ENCODE measurements at regions of chr15 and their contacts with region 1.

Region 1: DNA sequence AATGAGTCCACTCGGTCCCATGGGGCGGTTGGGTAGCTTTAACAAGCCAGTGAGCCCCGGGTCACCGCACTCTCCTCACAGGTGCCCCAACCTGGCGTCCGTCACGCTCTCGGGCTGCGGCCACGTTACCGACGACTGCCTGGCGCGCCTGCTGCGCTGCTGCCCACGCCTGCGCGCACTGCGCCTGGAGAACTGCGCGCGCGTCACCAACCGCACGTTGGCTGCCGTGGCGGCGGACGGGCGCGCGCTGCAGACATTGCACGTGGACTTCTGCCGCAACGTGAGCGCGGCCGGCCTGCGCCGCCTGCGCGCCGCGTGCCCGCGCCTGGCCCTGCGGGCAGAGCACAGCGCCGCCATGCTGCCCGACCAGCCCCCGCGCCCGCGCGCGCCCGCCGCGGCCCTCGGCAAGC is 3.4 kb downstream of the FBXL22 start:
- DNase-seq: peak; percentile 63 to 92 (median 85)
- H3K4me3 ChIP-seq: peak overlapping the region; percentile 52 to 93 (median 80)
- H3K27ac ChIP-seq: peak overlapping the region; percentile 76 to 98 (median 93)
- H3K27me3 ChIP-seq: no peaks in the 10 kb centered on the region
- CTCF ChIP-seq: peak in 29 of 56 donors; percentile 7 to 63 (median 37)

Region 2: DNA sequence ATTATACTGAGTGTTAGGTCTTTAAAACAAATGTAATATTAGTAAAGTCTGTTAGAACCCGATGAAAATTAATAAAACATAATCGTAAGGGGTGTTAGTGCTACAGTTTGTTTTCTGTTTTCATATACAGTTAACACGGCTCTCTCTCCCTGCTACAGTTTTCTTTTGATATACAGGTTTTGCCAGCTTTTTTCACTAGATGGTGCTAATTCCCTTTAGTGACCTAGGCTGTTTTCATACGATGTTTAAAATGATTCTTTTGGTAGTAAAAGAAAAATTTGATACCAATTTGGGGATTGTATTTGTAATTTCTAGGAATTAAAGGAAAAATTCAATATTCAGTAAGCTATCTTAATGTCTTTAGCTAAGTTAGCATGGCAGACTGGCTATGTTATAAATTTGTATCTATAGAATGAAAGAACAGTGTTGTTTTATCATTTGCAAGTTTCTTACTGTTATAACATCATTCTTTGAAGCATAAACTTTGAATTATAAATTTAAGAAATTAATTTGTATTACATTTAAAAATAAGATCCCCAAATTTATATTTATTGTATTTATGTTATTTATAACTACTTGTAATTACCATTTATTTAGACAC is 311.7 kb before region 1 on chr15:
- intact Hi-C with region 1: loop called (anchors 10 kb)
- DNase-seq: no peak
- H3K4me3 ChIP-seq: peak overlapping the region in 8 of 59 donors; percentile 2 to 24 (median 10)
- H3K27ac ChIP-seq: peak overlapping the region in 19 of 59 donors; percentile 0 to 78 (median 32)
- H3K27me3 ChIP-seq: no peaks in the 10 kb centered on the region
- CTCF ChIP-seq: peak; percentile 50 to 92 (median 74)

Region 3: DNA sequence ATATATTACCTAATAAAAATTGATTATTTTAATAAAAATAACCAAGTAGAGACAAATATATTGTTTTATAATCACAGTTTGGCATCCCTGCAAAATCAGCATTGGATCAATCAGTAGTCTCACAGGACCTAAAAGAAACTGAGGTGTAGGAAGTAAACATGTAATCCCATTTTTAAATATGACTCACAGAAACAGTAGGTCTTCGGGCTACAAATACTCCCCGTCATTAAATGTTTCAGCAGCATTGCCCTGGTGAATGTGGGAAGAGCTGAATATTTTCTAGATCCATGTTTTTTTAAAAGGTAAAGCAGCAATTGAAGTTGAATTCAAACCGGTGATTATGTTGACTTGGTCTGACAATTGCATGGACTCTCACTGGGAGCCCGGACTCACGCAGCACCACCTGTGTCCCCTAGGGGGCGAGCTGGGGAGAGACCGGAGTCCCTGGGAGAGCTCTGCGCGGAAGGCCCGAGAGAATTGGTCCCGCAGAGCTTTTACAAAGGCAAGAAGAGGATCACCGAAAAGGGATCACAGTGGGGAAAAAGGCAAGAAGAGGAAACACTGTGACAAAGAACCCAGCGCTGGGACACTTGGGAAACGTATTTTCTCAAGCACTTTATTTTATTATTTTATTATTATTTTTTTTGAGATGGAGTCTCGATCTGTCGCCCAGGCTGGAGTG is 113.4 kb before region 1 on chr15:
- intact Hi-C with region 1: loop called in 1 of 2 experiments (anchors 5 kb)
- DNase-seq: peak; percentile 74 to 88 (median 82)
- H3K4me3 ChIP-seq: peak overlapping the region in 4 of 59 donors; percentile 5 to 42 (median 20)
- H3K27ac ChIP-seq: no peak overlapping the region
- H3K27me3 ChIP-seq: no peaks in the 10 kb centered on the region
- CTCF ChIP-seq: peak in 55 of 56 donors; percentile 44 to 92 (median 83)

Region 4: GRCh38 chr15:63560741-63561448 is 39.7 kb before region 1 on chr15:
- intact Hi-C with region 1: no loop called
- DNase-seq: no peak
- H3K4me3 ChIP-seq: no peak overlapping the region
- H3K27ac ChIP-seq: no peak overlapping the region
- H3K27me3 ChIP-seq: no peaks in the 10 kb centered on the region
- CTCF ChIP-seq: no peak

Region 5: GRCh38 chr15:63655683-63656372 is 55.2 kb after region 1 on chr15:
- intact Hi-C with region 1: no loop called
- DNase-seq: no peak
- H3K4me3 ChIP-seq: no peak overlapping the region
- H3K27ac ChIP-seq: no peak overlapping the region
- H3K27me3 ChIP-seq: no peaks in the 10 kb centered on the region
- CTCF ChIP-seq: no peak

Region 6: DNA sequence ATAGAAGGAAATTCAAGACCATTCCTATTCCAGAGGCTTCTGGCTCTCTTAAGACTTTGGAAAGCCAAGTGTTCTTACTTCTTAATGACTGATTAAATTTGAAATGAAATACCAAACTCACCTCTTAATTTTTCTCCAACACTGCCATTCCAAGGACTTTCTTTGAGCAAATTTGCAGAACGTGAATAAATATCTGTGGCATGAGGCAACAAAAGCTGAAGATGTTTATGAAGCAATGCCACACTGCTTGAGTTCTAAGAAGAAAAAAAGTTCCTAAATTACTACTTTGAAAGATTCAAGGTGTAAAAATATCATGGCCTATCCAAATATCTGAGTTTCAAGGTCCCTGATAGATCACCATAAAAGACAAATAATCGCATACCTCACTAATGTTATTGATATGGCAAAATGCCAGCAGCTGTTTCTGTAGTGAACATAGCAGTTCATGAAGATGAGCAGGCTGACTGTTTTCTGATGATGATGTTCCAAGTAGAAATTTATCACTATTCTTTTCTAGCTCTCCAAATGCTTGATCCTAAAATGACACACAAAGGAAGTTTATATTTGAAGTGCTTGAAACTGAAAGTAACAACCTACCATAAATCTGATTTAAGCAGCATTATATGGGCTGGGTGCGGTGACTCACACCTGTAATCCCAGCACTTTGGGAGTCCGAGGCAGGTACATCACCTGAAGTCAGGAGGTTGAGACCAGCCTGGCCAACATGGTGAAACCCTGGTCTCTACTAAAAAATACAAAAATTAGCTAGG is 128.7 kb after region 1 on chr15:
- intact Hi-C with region 1: loop called (anchors 10 kb)
- DNase-seq: no peak
- H3K4me3 ChIP-seq: no peak overlapping the region
- H3K27ac ChIP-seq: no peak overlapping the region
- H3K27me3 ChIP-seq: no peaks in the 10 kb centered on the region
- CTCF ChIP-seq: no peak

Region 7: DNA sequence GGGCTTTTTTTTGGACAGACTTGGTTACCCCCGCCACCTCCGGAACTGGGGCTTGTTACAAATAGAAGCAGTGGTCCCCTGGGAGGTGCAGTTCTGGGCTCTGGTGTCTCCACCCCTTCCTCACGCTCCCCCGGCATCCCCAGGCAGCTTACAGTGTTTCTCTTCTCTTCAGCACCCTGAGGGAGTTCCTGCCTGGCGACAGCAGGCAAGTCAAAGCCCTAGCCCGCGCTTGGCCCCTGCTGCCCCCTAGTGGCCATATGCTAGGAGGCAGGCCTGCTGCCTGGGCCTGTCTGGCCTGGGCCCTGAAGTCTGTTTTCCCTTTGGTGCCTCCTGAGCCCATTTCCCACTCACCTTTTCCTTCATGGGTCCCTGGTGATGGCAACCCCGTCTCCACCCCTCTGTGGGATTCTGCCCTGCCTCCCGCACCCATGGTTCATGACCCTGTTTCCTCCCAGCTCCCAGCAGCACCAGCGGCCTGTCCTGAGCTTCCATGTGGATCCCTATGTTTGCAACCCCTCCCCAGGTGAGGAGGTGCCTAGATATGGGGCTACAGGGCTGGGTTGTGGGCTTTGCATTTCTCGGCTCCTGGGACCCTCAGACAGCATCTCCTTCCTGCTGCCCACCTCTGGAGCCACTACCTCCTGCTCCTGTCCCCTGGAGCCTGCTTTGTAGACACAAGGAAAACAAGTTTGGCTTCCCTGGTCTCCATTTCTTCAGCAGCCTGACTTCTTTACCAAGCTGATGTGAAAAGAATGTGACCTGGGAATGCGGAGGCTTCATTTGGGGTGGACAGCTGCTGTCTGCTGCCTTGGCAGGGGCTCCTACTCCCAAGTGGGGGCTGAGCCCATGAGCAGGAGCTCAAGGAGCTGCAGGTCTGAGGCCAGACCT is 553.1 kb after region 1 on chr15:
- intact Hi-C with region 1: loop called in 1 of 2 experiments (anchors 10 kb)
- DNase-seq: peak; percentile 91 to 95 (median 92)
- H3K4me3 ChIP-seq: peak overlapping the region in 56 of 59 donors; percentile 5 to 86 (median 70)
- H3K27ac ChIP-seq: peak overlapping the region in 57 of 59 donors; percentile 1 to 96 (median 80)
- H3K27me3 ChIP-seq: peaks cover 0 to 19% (median 5%) of the 10 kb centered on the region in 45 donors
- CTCF ChIP-seq: peak; percentile 80 to 99 (median 97)